ENCODE measurements at regions of chr19 and their contacts with region 1.

Region 1: GRCh38 chr19:41821003-41821735 is 23.3 kb downstream of the LYPD4 start:
- DNase-seq: peak; percentile 57
- ATAC-seq: peak; percentile 97
- H3K4me3 ChIP-seq: no peak overlapping the region
- H3K27ac ChIP-seq: no peak overlapping the region
- H3K4me1 ChIP-seq: no peaks in the 10 kb centered on the region
- H3K27me3 ChIP-seq: peaks cover 4% of the 10 kb centered on the region
- CTCF ChIP-seq: peak; percentile 79 to 83 (median 83)
- POLR2A ChIP-seq: no peak
- RAD21 ChIP-seq: peak; percentile 81

Region 2: GRCh38 chr19:41746593-41747227 is 74.5 kb before region 1 on chr19:
- CTCF ChIA-PET with region 1: no interaction called
- POLR2A ChIA-PET with region 1: no interaction called
- RAD21 ChIA-PET with region 1: no interaction called
- intact Hi-C with region 1: loop called (anchors 2 kb)
- DNase-seq: peak; percentile 47
- ATAC-seq: peak; percentile 97
- H3K4me3 ChIP-seq: no peak overlapping the region
- H3K27ac ChIP-seq: no peak overlapping the region
- H3K4me1 ChIP-seq: no peaks in the 10 kb centered on the region
- H3K27me3 ChIP-seq: peaks cover 62% of the 10 kb centered on the region
- CTCF ChIP-seq: peak; percentile 56 to 84 (median 67); a peak in 5 of 6 replicates
- POLR2A ChIP-seq: no peak
- RAD21 ChIP-seq: peak; percentile 74